Activated CD8-positive, alpha-beta T cell treated with anti-CD3 and anti-CD28 coated beads for 36 hours (primary cell): ENCODE measurements at regions of chr10 and their contacts with region 1.

Region 1: DNA sequence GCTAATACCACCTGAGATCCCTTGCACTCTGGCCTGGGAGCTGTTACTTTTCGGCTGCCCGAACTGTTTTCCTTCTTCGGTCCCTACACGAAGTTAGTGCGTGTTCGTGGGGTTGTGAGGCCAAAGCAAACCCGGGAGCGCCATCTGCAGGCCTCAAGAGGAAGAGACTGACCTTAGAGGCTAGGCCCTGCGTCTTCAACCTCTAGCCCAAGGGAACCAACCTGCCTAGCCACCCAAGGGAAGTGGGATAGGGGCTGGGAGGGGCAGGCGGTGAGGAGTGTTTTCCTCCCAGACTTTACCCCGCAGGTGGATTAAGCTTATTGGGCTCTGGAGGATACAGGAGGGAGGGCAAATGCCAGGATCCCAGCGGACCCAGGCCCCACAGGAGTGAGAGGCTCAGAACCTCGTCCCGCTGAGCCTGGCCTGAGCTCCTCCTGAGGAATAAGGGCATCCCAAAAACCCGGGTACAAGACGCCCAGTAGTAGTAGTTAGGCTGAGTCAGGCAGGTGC is 1.7 kb upstream of the PAX2 start:
- DNase-seq: peak; percentile 76
- ATAC-seq: peak; percentile 71
- H3K4me3 Mint-ChIP-seq: no peak overlapping the region
- H3K27ac Mint-ChIP-seq: no peak overlapping the region
- H3K4me1 Mint-ChIP-seq: peaks cover 29% of the 10 kb centered on the region
- H3K27me3 Mint-ChIP-seq: peaks cover 80% of the 10 kb centered on the region
- CTCF ChIP-seq: peak; percentile 74

Region 2: GRCh38 chr10:100551196-100551595 is 192.5 kb before region 1 on chr10:
- CTCF ChIA-PET with region 1: interaction called, 13 read pairs
- POLR2A ChIA-PET with region 1: no interaction called
- intact Hi-C with region 1: no loop called
- DNase-seq: no peak
- ATAC-seq: no peak
- H3K4me3 Mint-ChIP-seq: no peak overlapping the region
- H3K27ac Mint-ChIP-seq: no peak overlapping the region
- H3K4me1 Mint-ChIP-seq: no peaks in the 10 kb centered on the region
- H3K27me3 Mint-ChIP-seq: no peaks in the 10 kb centered on the region
- CTCF ChIP-seq: no peak

Region 3: DNA sequence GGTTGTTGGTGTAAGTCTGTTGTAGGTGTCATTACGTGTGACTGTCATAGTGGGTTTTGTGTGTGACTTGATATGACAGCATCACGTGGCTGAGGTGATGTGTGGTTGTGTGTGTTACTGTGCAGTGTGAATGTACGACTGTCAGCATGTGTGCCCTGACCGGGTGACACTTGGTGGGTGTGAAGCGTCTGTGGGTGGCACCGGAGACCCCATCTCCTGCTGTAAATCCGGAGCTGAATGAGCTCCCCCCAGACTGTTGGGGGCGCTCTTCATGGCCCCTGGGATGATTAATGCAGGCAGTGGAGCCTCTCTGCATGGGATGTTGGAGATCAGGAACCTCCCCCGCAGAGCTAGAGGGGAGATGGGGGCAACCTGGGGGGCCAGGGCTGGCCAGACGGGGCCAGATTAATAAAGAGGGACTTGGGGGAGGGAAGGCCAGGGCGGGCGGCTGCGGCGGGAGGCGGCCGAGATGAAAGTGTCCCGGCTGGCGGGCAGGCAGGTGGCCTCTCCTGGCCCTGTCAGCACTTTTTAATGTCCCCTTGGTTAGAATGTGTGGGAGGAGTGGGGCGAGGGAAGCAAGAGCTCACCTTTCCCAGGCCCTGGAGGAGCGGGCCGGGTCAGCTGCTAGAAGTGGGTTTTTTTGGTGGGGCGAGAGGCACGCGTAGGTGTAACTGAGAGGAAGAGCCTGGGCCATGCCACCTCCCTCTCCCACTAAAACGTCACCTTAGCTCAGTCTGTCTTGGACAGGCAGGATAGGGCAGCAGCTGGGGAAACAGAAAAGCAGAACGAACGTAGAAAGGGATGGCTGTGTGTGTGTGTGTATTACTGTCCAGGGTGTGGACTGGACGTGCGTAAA is 173.8 kb before region 1 on chr10:
- CTCF ChIA-PET with region 1: interaction called, 10 read pairs
- POLR2A ChIA-PET with region 1: no interaction called
- intact Hi-C with region 1: no loop called
- DNase-seq: peak; percentile 35
- ATAC-seq: peak; percentile 34
- H3K4me3 Mint-ChIP-seq: no peak overlapping the region
- H3K27ac Mint-ChIP-seq: no peak overlapping the region
- H3K4me1 Mint-ChIP-seq: no peaks in the 10 kb centered on the region
- H3K27me3 Mint-ChIP-seq: peaks cover 39% of the 10 kb centered on the region
- CTCF ChIP-seq: no peak

Region 4: DNA sequence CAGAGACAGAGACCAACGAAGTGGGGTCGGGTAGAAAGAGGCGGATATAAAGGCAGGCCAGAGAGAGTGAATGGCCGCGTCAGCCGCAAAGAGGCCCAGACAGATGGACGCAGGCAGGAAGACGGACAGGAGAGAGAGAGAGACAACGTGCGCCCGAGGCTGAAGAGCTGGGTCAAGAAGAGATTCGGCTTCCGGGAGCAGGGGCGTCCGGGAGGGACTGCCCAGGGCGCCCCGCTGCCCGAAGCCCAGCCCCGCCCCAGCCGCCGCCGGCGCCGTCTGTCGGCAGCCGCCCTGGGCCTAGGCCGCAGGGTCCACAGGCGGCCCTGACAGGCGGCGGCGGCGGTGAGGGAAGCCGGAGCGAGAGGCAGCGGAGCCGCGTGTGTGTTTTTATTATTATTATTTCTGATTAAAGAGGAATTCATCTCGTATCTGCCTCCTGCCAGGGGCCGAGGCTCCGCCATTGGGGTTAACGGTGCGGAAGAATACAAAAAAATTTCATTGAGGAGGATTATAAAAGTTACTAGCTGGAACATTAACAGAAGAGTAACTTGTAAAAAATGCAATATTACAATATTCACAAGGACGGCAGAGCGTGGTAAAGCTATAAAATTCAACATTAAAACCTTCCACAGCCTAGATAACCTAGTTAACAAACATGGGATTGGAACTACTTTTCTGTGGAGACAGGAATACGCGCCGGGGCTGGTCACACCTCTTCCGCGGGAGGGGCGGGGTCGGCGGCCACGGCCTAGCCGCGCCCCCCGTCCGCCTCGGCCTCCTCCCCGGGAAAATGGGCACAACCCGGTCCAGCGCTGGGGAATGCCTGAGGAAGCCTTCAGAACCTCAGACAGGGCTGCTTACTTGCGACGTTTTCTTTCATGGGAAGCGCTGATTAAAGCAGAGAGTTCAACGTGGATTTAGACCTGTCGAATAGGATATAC is 28.0 kb before region 1 on chr10:
- CTCF ChIA-PET with region 1: interaction called, 10 read pairs
- POLR2A ChIA-PET with region 1: no interaction called
- intact Hi-C with region 1: no loop called
- DNase-seq: no peak
- ATAC-seq: no peak
- H3K4me3 Mint-ChIP-seq: peak overlapping the region; percentile 17
- H3K27ac Mint-ChIP-seq: no peak overlapping the region
- H3K4me1 Mint-ChIP-seq: peaks cover 8% of the 10 kb centered on the region
- H3K27me3 Mint-ChIP-seq: peaks cover 75% of the 10 kb centered on the region
- CTCF ChIP-seq: no peak

Region 5: DNA sequence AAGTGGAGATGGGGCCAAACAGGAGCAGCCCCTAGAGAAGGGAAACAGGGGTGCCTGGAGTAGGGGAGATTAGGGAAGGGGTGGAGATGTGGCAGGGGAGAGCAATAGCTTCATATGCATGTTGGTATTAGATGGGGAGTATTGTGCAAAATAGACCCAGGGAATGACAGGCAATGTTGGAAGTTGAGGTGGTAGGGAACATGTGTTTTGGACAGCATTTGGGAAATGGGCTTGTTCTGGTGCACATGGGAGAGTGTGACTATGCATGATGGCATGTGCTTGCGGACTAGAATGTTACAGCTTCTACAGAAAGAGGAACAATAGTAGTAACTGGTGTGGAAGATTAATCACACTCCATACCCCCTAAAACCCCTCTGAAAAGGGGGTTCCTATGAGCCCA is 12.1 kb after region 1 on chr10:
- CTCF ChIA-PET with region 1: interaction called, 21 read pairs
- POLR2A ChIA-PET with region 1: interaction called, 4 read pairs
- intact Hi-C with region 1: no loop called
- DNase-seq: no peak
- ATAC-seq: no peak
- H3K4me3 Mint-ChIP-seq: no peak overlapping the region
- H3K27ac Mint-ChIP-seq: no peak overlapping the region
- H3K4me1 Mint-ChIP-seq: no peaks in the 10 kb centered on the region
- H3K27me3 Mint-ChIP-seq: peaks cover 69% of the 10 kb centered on the region
- CTCF ChIP-seq: no peak

Region 6: DNA sequence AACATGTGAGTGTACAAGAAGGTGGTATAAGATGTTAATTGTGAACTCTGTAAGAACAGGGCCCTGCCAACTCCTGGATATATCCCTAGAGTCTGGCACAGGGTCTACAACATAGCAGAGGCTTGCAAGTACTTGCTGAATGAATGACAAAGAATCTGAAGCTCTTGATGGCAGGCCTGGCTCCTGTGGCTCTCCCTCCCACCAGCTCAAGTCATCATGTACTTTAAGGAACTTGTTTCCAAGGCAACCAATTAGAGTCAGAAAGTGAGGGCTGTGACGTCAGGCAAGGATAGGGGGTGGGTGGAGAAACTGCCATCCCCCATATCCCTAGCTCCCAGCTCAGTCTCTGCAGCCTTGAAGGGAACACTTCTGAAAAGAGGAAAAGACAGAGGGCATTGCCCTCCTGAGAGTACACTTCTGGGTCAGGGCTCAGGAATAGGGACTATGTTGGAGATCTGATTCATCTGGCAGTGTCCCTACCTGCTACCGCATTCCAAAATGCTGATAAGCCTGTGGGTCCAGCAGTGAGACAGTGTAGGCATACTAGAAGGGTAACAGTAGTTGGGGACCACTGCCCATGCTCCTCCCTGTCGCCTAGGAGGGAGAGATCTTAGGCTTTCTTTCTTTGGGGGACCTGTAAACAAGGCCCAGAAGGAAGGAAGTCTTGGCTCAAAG is 575.7 kb after region 1 on chr10:
- CTCF ChIA-PET with region 1: no interaction called
- POLR2A ChIA-PET with region 1: no interaction called
- intact Hi-C with region 1: no loop called
- DNase-seq: no peak
- ATAC-seq: no peak
- H3K4me3 Mint-ChIP-seq: no peak overlapping the region
- H3K27ac Mint-ChIP-seq: no peak overlapping the region
- H3K4me1 Mint-ChIP-seq: no peaks in the 10 kb centered on the region
- H3K27me3 Mint-ChIP-seq: peaks cover 5% of the 10 kb centered on the region
- CTCF ChIP-seq: no peak